Activated B cell treated with CpG ODN at 0.5 μM for 24 hours (primary cell): ENCODE measurements at regions of chr5 and their contacts with region 1.

Region 1: DNA sequence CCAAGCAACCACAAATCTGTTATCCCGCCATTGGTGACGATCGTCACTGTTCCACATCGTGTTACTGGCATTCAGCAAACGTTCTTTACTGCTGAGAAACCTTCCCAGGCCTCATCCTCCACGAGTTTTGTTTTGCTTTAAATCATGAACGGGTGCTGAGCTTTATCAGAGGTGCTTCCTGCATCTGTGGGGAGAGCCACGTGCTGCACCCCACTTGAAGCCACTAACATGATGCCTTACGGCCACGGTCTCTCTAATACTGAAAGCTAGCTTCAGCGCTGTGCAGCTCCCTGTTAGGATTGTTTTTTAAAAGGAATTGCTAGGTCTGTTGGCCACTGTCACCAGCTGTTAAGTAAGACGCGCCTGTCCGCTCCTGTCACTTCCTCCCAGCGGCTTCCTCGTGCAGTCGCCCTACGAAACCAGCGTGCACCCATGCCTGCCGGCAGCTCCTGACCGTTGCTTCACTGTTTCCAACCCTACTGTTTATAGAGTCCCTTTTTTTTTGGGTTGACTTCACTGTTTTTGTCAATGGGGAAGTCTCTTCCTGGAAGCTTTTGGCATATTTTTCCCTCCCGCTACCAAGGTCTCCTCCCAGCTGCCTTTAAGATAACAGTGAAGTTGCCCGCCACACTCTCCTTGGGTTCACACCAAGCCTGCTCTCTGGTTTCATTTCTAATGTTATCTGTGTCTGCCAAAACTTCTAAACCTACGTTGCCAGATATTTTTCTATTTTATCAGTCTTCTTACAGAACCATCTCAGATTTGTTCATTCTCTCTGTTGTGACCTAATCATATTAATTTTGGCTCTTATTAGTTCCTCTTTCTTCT is 20.3 kb downstream of the LPCAT1 start:
- DNase-seq: peak; percentile 43
- ATAC-seq: peak; percentile 38
- H3K4me3 Mint-ChIP-seq: peak overlapping the region; percentile 80
- H3K27ac Mint-ChIP-seq: peak overlapping the region; percentile 99
- H3K4me1 Mint-ChIP-seq: peaks cover 93% of the 10 kb centered on the region
- H3K27me3 Mint-ChIP-seq: no peaks in the 10 kb centered on the region
- CTCF ChIP-seq: no peak

Region 2: DNA sequence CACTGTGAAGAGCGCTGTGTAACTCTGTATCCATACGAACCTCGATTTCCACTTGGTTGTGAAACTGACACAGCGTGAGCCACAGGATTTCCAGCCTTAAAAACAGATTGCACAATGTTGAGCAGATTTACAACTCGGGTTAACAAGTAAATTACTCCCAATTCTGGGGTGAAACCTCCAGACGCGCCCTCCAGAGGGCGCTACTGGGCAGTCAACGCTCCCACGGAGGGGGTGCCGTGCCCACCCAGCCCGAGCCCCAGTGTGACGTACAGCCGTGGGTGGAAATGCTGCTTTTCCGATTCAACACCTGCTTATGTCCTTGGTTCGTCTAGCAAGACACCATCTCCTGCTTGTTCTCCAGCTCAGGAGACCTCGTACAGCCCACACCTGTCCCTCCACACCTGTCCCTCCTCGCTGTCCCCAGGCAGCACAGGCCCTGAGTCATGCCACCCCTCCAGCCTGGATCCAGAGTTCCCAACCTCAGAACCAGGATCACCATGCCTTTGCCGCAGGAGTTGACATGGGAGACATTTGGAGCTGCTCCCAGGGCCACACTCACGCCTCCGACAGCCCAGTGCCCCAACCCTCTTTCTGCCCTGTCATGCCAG is 23.8 kb before region 1 on chr5:
- CTCF ChIA-PET with region 1: interaction called, 76 read pairs
- POLR2A ChIA-PET with region 1: interaction called, 941 read pairs
- intact Hi-C with region 1: loop called (anchors 1 kb)
- DNase-seq: peak; percentile 68
- ATAC-seq: peak; percentile 53
- H3K4me3 Mint-ChIP-seq: peak overlapping the region; percentile 73
- H3K27ac Mint-ChIP-seq: peak overlapping the region; percentile 92
- H3K4me1 Mint-ChIP-seq: peaks cover 61% of the 10 kb centered on the region
- H3K27me3 Mint-ChIP-seq: no peaks in the 10 kb centered on the region
- CTCF ChIP-seq: no peak

Region 3: DNA sequence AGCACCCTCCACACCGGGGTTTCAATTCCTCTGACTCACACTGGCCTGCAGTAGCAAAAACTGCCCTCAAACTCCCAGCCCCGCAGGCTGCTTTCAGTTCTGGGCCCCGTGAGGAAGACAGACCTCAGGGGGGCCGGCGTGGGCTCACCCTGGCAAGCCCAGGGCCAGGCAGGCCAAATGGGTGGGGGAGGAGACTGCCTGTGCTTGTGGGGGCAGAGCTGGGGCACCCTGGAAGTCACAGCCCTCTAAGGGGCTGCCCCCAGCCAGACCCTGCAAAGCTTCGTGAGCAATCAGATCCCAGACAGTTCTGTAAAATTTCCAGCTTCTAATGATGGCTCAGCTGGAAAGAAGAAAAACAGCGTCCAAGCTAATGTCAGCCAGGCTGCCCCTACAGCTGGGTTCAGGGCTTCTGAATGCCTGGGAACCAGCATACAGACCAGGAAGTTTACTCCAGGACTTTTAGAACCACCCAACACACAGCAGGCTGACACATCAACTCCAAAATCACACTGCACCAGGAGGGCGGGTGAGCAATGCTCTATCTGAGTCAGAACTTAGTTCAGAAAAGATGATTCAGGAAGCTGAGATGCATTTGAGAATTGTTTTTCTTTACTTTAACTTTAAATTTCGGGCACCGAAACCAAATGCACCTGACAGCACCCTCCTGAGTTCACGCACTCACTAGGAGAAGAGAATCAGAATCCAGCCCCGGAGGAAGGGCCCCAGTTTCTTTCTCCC is 14.3 kb before region 1 on chr5:
- CTCF ChIA-PET with region 1: interaction called, 76 read pairs
- POLR2A ChIA-PET with region 1: interaction called, 941 read pairs
- intact Hi-C with region 1: loop called (anchors 1 kb)
- DNase-seq: peak; percentile 62
- ATAC-seq: peak; percentile 51
- H3K4me3 Mint-ChIP-seq: peak overlapping the region; percentile 78
- H3K27ac Mint-ChIP-seq: peak overlapping the region; percentile 83
- H3K4me1 Mint-ChIP-seq: peaks cover 100% of the 10 kb centered on the region
- H3K27me3 Mint-ChIP-seq: no peaks in the 10 kb centered on the region
- CTCF ChIP-seq: no peak

Region 4: DNA sequence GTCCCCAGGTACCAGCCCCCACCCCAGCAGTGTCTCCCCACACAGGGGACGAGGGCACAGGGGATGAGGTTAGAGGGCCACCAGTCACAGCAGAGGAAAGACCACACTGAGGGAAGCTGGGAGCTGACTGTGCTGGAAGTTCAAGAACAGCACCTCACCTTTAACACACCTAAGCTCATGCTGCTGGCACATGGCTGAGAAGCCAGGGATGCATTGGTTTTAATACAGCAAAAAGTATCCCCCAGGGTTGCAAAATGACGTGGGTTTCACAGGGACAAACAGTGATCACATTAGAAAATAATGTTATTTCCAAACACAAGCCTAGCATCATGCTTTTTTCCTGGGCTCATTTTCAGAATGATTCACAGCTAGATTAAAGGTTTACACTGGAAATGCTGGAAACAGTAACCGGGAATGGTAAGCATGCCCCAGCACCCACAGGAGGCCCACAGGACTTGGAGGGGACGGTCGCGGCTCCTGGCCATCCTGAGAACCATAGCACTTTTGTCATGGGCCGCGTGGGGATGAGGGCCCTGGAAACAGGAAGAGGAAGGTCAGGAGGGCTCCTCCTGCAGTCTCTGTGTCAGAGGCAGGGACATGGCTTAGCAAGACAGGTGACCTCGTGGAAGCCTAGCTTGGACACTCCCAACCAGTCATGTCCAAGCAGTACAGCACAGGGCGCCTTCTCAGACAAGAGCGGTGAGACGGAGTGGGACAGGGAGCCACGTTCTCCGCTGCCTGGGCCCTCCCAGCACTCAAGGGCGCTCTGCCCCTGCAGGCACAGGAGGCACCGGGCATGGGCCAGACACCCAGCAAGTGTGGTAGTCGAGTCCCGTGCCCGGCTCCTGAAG is 13.5 kb after region 1 on chr5:
- CTCF ChIA-PET with region 1: no interaction called
- POLR2A ChIA-PET with region 1: interaction called, 24 read pairs
- intact Hi-C with region 1: no loop called
- DNase-seq: peak; percentile 12
- ATAC-seq: no peak
- H3K4me3 Mint-ChIP-seq: no peak overlapping the region
- H3K27ac Mint-ChIP-seq: peak overlapping the region; percentile 12
- H3K4me1 Mint-ChIP-seq: peaks cover 48% of the 10 kb centered on the region
- H3K27me3 Mint-ChIP-seq: no peaks in the 10 kb centered on the region
- CTCF ChIP-seq: no peak